ENCODE measurements at regions of chr19 and their contacts with region 1.

Region 1: GRCh38 chr19:10580979-10581631 is 6.0 kb downstream of the AP1M2 start:
- DNase-seq: peak; percentile 98
- ATAC-seq: peak; percentile 100
- H3K4me3 Mint-ChIP-seq: no peak overlapping the region
- H3K27ac Mint-ChIP-seq: no peak overlapping the region
- H3K4me1 Mint-ChIP-seq: peaks cover 7% of the 10 kb centered on the region
- H3K27me3 Mint-ChIP-seq: no peaks in the 10 kb centered on the region
- CTCF ChIP-seq: peak; percentile 100

Region 2: DNA sequence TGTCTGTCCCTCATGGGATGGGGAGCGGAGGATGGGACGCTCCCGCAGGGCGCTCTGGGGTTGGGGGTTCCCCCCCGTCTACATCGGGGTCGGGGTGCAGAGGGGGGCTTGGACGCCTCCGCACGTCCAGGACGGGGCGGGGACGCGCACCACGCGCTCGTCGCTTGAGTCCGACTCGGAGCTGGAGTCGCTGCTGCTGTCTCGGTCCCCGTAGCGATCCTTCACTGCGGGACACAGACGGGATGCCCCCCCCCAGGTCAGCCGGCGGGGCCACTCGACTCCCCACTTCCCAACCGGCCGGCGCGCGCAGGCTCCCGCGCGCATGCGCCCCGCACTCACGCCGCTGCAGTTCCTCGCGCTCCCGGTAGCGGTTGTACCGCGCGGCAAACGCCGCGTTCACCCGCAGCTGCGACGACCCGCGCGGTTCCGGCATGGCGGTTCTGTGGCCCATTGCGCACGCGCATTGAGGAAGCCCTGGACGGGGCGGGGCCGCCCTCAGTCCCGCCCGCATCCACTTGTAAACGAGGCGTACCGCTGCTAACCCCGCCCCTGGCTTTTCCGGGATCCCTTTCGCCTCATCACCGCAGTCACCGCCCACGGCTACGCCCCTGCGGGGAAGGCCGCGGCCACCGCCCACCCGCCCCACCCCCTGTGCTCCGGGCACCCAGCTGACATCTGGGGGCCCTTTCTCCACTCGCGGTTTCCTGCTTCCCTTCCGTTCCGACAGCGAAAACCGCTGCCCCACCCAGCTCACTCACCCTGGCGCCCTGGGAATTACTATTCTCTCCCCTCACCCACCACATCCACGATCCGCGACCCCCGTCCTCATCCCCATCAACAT is 15.3 kb before region 1 on chr19 and contains the start of gene KRI1:
- CTCF ChIA-PET with region 1: interaction called, 25 read pairs
- POLR2A ChIA-PET with region 1: interaction called, 3 read pairs
- intact Hi-C with region 1: no loop called
- DNase-seq: peak; percentile 99
- ATAC-seq: peak; percentile 43
- H3K4me3 Mint-ChIP-seq: peak within 1 kb of the TSS; percentile 86
- H3K27ac Mint-ChIP-seq: peak within 1 kb of the TSS; percentile 92
- H3K4me1 Mint-ChIP-seq: peaks cover 37% of the 10 kb centered on the region
- H3K27me3 Mint-ChIP-seq: no peaks in the 10 kb centered on the region
- CTCF ChIP-seq: peak; percentile 33
- total RNA-seq, gene KRI1: 50.0 to 58.3 TPM

Region 3: GRCh38 chr19:10612491-10613119 is 31.5 kb after region 1 on chr19:
- CTCF ChIA-PET with region 1: interaction called, 35 read pairs
- POLR2A ChIA-PET with region 1: no interaction called
- intact Hi-C with region 1: no loop called
- DNase-seq: no peak
- ATAC-seq: no peak
- H3K4me3 Mint-ChIP-seq: no peak overlapping the region
- H3K27ac Mint-ChIP-seq: peak overlapping the region; percentile 5
- H3K4me1 Mint-ChIP-seq: peaks cover 28% of the 10 kb centered on the region
- H3K27me3 Mint-ChIP-seq: no peaks in the 10 kb centered on the region
- CTCF ChIP-seq: no peak

Region 4: DNA sequence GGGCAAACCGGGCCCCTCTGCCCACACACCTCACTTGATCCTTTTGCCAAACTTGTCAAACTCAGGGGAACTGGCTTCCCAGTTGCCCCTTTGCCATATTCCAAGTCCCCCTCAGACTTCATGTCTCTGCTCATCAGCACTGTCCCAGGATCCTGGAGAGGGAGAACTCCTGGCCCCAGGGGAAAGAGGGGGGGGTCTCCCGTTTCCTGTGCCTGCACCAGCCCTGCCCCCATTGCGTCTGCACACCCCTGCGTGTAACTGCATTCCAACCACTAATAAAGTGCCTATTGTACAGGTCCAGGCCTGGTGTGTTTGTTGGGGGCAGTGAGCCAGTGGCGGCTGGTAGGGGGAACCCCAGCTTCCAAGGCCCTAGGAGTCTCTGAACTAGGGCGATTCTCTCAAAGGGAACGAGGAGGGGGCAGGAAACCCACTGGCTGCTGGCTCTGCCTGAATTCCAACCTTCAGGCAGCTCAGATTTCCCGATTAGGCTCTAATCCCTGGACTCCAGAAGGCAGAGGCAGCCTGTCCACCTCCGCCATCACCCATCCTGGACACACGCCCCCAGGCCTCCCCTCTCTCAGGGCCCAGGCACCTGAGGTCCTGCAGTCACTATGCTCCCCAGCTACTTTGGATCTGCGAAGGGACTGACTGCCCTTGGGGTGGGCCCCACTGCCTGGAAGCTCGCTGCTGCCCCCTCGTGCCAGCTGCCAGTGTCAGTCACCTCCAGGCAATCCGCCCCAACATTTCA is 63.3 kb after region 1 on chr19:
- CTCF ChIA-PET with region 1: interaction called, 409 read pairs
- POLR2A ChIA-PET with region 1: interaction called, 24 read pairs
- intact Hi-C with region 1: loop called (anchors 1 kb)
- DNase-seq: peak; percentile 90
- ATAC-seq: peak; percentile 90
- H3K4me3 Mint-ChIP-seq: no peak overlapping the region
- H3K27ac Mint-ChIP-seq: peak overlapping the region; percentile 90
- H3K4me1 Mint-ChIP-seq: peaks cover 47% of the 10 kb centered on the region
- H3K27me3 Mint-ChIP-seq: no peaks in the 10 kb centered on the region
- CTCF ChIP-seq: peak; percentile 92

Region 5: DNA sequence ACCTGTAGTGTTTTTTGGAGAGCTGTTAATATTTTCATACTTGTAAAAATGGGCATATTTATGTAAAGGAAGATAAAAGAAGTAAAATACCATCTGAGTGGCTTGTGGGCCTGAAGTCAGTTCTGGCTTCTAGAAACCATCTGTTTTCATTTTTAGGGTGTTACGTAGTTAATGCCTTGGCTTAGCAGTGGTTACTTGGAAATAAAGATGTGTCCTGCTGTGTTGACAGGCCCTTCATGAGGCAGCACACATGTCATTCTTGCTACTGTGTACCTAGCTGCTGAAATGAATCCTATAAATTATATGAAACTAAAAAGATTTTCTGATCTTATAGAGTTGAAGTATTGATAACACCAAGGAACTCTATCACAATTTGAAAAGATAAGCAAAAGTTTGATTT is 89.1 kb after region 1 on chr19:
- CTCF ChIA-PET with region 1: interaction called, 11 read pairs
- POLR2A ChIA-PET with region 1: no interaction called
- intact Hi-C with region 1: no loop called
- DNase-seq: no peak
- ATAC-seq: no peak
- H3K4me3 Mint-ChIP-seq: no peak overlapping the region
- H3K27ac Mint-ChIP-seq: no peak overlapping the region
- H3K4me1 Mint-ChIP-seq: peaks cover 33% of the 10 kb centered on the region
- H3K27me3 Mint-ChIP-seq: no peaks in the 10 kb centered on the region
- CTCF ChIP-seq: no peak

Measured in activated CD8-positive, alpha-beta T cell treated with anti-CD3 and anti-CD28 coated beads for 36 hours (primary cell).